ENCODE measurements at regions of chr3 and their contacts with region 1.

Region 1: GRCh38 chr3:104102386-104102785 is 1264.3 kb upstream of the ALCAM start:
- DNase-seq: no peak
- ATAC-seq: peak; percentile 76
- H3K4me3 Mint-ChIP-seq: no peak overlapping the region
- H3K27ac Mint-ChIP-seq: no peak overlapping the region
- H3K4me1 Mint-ChIP-seq: peaks cover 3% of the 10 kb centered on the region
- H3K27me3 Mint-ChIP-seq: peaks cover 2% of the 10 kb centered on the region
- CTCF ChIP-seq: no peak

Region 2: GRCh38 chr3:103765006-103765405 is 337.4 kb before region 1 on chr3:
- CTCF ChIA-PET with region 1: no interaction called
- POLR2A ChIA-PET with region 1: no interaction called
- intact Hi-C with region 1: no loop called
- DNase-seq: no peak
- ATAC-seq: no peak
- H3K4me3 Mint-ChIP-seq: no peak overlapping the region
- H3K27ac Mint-ChIP-seq: no peak overlapping the region
- H3K4me1 Mint-ChIP-seq: no peaks in the 10 kb centered on the region
- H3K27me3 Mint-ChIP-seq: no peaks in the 10 kb centered on the region
- CTCF ChIP-seq: no peak

Region 3: GRCh38 chr3:104198131-104198530 is 95.7 kb after region 1 on chr3:
- CTCF ChIA-PET with region 1: no interaction called
- POLR2A ChIA-PET with region 1: no interaction called
- intact Hi-C with region 1: no loop called
- DNase-seq: no peak
- ATAC-seq: no peak
- H3K4me3 Mint-ChIP-seq: no peak overlapping the region
- H3K27ac Mint-ChIP-seq: no peak overlapping the region
- H3K4me1 Mint-ChIP-seq: no peaks in the 10 kb centered on the region
- H3K27me3 Mint-ChIP-seq: no peaks in the 10 kb centered on the region
- CTCF ChIP-seq: no peak

Region 4: GRCh38 chr3:104460477-104461406 is 358.4 kb after region 1 on chr3:
- CTCF ChIA-PET with region 1: interaction called, 3 read pairs
- POLR2A ChIA-PET with region 1: no interaction called
- intact Hi-C with region 1: loop called (anchors 1 kb)
- DNase-seq: no peak
- ATAC-seq: no peak
- H3K4me3 Mint-ChIP-seq: no peak overlapping the region
- H3K27ac Mint-ChIP-seq: peak overlapping the region; percentile 15
- H3K4me1 Mint-ChIP-seq: peaks cover 4% of the 10 kb centered on the region
- H3K27me3 Mint-ChIP-seq: no peaks in the 10 kb centered on the region
- CTCF ChIP-seq: no peak

Region 5: DNA sequence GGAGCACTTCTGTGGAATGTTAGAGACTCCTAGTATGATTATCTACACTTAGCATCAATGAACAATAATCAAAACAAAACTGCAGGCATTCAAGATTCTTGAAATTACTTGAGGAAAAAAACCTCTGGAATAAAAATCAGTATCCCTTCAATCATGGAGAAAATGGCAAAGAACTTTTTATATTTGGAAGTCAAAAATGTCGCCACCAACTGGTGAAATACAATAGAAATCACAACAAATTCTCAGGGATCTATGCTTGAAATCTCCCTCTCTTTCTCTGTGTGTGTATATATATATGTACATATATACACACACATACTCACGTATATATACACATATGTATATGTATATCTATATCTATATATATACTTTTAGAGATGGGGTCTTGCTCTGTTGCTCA is 885.5 kb after region 1 on chr3:
- CTCF ChIA-PET with region 1: no interaction called
- POLR2A ChIA-PET with region 1: no interaction called
- intact Hi-C with region 1: loop called (anchors 5 kb)
- DNase-seq: no peak
- ATAC-seq: no peak
- H3K4me3 Mint-ChIP-seq: no peak overlapping the region
- H3K27ac Mint-ChIP-seq: no peak overlapping the region
- H3K4me1 Mint-ChIP-seq: no peaks in the 10 kb centered on the region
- H3K27me3 Mint-ChIP-seq: no peaks in the 10 kb centered on the region
- CTCF ChIP-seq: no peak

Measured in activated B cell treated with CpG ODN at 0.5 μM for 24 hours (primary cell).